ENCODE measurements at regions of chr1 and their contacts with region 1.

Region 1: GRCh38 chr1:176843352-176844297 is 320.9 kb downstream of the ASTN1 start:
- DNase-seq: no peak
- H3K4me3 ChIP-seq: no peak overlapping the region
- H3K27ac ChIP-seq: no peak overlapping the region
- H3K4me1 ChIP-seq: peaks cover 26% of the 10 kb centered on the region
- H3K27me3 ChIP-seq: no peaks in the 10 kb centered on the region
- CTCF ChIP-seq: peak; percentile 72

Region 2: DNA sequence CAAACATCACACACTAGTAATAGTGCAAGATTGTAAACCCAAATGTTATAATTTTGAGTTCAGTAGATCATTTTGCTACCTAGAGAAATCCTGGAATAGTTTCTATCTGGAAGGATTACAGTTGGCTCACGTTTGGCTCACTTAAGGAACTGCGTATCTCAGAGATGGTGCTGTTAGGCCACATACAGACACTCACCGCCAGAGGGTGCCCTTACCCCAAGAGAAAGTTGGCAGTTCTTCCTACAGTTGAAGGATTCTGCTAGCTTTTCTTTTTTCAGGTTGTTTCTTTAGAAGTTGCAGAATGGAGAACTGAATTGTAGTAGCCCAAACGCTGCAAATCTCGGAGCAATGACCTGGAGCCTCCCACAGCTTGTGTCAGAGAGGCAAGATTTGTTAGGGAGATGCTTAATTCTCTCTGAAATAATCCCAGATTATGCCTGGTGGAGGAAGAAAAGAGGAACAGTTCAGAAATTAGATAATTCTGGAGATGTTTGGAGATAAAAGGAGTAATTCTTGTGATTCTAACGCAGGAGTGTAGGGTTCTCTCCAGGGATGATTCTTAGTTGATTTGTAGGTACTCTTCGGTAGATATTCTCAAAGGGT is 468.6 kb before region 1 on chr1:
- intact Hi-C with region 1: loop called (anchors 5 kb)
- DNase-seq: peak; percentile 70
- H3K4me3 ChIP-seq: no peak overlapping the region
- H3K27ac ChIP-seq: no peak overlapping the region
- H3K4me1 ChIP-seq: peaks cover 3% of the 10 kb centered on the region
- H3K27me3 ChIP-seq: no peaks in the 10 kb centered on the region
- CTCF ChIP-seq: peak; percentile 86

Region 3: DNA sequence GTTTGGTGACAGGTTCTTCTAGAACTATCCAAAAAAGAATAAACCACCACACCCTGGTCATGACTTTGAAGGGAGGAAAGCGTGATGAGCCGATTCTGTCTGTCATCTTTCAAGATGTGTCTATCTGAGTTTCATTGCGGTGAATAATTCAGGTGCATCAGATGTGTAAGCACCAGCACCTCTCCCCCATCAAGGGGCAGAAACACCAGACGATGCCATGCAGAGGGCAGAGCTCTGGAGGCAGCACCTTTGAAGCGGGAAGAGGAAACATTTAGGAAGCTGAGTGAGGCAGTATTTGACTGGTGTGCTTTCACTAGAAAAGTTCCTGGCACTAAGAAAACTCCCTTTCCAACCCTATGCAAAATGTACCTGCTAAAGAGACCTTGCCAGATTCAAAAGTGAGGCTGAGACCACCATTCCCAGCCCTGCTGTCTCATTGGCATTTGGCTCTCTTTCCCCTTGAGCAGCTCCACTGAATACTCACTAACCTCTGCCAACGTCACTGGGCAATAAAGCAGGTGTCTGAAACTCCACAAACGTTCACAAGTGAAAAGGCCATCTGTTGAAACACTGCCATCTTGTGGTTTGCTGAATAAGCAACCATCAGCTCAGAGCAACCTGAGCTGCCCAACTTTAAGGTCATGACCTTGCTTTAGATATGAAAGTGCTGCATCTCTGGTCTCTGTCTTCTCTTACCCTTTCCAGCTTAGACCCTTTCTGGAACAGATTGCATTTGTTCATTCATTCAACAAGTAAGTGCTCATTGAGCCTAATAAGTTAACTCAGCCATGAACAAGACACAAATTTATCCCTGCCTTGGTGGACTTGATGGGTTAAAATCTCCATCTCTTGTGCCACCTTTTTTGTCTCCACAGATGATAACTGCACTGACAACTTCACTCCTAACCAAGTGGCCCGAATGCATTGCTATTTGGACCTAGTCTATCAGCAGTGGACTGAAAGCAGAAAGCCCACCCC is 152.1 kb before region 1 on chr1:
- intact Hi-C with region 1: loop called (anchors 10 kb)
- DNase-seq: no peak
- H3K4me3 ChIP-seq: peak overlapping the region; percentile 16
- H3K27ac ChIP-seq: peak overlapping the region; percentile 91
- H3K4me1 ChIP-seq: peaks cover 17% of the 10 kb centered on the region
- H3K27me3 ChIP-seq: no peaks in the 10 kb centered on the region
- CTCF ChIP-seq: peak; percentile 77

Region 4: GRCh38 chr1:177546346-177546745 is 702.7 kb after region 1 on chr1:
- intact Hi-C with region 1: no loop called
- DNase-seq: no peak
- H3K4me3 ChIP-seq: no peak overlapping the region
- H3K27ac ChIP-seq: no peak overlapping the region
- H3K4me1 ChIP-seq: no peaks in the 10 kb centered on the region
- H3K27me3 ChIP-seq: peaks cover 38% of the 10 kb centered on the region
- CTCF ChIP-seq: no peak

Measured in left ventricle myocardium inferior (tissue), 1 donor.